MCF 10A (cell line): ENCODE measurements at regions of chr2 and their contacts with region 1.

Region 1: GRCh38 chr2:196586511-196586991 is 53.0 kb upstream of the CCDC150 start:
- DNase-seq: peak; percentile 81
- H3K4me3 Mint-ChIP-seq: peak overlapping the region; percentile 1
- H3K27ac Mint-ChIP-seq: no peak overlapping the region
- H3K4me1 Mint-ChIP-seq: peaks cover 11% of the 10 kb centered on the region
- H3K27me3 Mint-ChIP-seq: no peaks in the 10 kb centered on the region
- CTCF ChIP-seq: no peak

Region 2: DNA sequence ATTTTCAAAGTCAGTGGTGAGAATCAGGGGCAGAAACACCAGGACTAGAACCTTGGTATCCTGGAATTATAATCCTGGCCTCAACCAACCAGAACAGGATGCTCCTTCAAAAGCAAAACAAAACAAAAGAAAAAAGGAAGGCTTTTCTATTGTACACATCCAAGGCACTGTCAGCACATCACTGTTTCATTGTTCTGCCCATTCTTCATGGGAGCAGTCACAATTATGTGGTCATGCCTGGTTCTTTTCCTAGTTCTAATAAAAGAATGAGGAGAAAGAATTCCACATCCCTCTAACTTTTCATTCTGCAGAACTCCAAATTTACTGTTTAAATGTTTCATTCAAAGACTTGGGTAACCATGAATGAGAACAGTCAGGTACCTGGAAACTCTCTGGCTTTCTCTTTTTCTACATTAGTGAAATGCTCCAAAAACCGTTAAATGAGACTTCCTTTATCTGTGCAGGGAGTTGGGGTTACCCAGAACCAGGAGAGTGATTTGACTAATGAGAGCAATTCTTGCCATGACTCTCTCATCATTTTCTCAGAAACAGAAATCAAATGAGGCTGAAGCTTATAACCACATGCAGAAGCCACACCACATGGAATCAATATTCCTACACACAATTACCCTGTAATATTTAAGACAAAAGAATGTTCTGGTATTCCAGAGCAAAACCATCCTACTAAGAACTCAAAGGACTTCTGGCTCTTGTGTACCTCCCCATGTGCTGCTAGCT is 57.9 kb before region 1 on chr2:
- CTCF ChIA-PET with region 1: no interaction called
- POLR2A ChIA-PET with region 1: no interaction called
- intact Hi-C with region 1: loop called (anchors 2 kb)
- DNase-seq: no peak
- H3K4me3 Mint-ChIP-seq: no peak overlapping the region
- H3K27ac Mint-ChIP-seq: no peak overlapping the region
- H3K4me1 Mint-ChIP-seq: no peaks in the 10 kb centered on the region
- H3K27me3 Mint-ChIP-seq: no peaks in the 10 kb centered on the region
- CTCF ChIP-seq: no peak

Region 3: DNA sequence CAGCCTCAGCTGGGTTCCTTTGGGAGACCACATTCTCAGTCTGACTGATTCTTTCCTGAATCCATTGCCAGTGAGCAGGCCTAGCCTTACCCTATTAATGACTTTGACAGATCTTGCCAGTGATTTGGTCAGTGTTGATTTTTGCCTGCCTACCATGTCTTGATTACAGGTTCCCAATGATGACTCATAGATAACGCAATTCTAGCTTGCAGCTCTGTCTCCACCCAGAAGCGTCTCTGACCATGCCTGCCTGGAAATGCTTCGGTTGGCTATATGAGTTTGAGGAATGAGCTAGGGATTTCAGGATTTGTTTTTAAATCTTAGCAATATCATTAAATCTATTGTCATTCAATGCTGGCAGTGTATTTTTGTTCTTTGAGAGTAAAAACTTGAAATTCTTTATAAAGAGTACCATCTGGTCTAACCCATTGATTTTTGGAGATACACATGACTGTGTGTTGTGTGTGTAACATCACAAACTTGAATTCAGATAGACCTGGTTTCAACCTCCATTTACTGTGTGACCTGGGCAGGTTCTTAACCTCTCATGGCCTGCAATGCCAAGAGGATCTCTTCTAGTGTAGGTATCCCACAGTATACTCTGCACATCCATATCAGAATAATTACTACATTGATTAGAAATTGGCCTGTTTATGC is 110.0 kb after region 1 on chr2:
- CTCF ChIA-PET with region 1: no interaction called
- POLR2A ChIA-PET with region 1: interaction called, 5 read pairs
- intact Hi-C with region 1: loop called (anchors 5 kb)
- DNase-seq: peak; percentile 87
- H3K4me3 Mint-ChIP-seq: peak overlapping the region; percentile 32
- H3K27ac Mint-ChIP-seq: peak overlapping the region; percentile 92
- H3K4me1 Mint-ChIP-seq: peaks cover 15% of the 10 kb centered on the region
- H3K27me3 Mint-ChIP-seq: no peaks in the 10 kb centered on the region
- CTCF ChIP-seq: no peak